CD4-positive, alpha-beta memory T cell (primary cell): ENCODE measurements at regions of chr2 and their contacts with region 1.

Region 1: DNA sequence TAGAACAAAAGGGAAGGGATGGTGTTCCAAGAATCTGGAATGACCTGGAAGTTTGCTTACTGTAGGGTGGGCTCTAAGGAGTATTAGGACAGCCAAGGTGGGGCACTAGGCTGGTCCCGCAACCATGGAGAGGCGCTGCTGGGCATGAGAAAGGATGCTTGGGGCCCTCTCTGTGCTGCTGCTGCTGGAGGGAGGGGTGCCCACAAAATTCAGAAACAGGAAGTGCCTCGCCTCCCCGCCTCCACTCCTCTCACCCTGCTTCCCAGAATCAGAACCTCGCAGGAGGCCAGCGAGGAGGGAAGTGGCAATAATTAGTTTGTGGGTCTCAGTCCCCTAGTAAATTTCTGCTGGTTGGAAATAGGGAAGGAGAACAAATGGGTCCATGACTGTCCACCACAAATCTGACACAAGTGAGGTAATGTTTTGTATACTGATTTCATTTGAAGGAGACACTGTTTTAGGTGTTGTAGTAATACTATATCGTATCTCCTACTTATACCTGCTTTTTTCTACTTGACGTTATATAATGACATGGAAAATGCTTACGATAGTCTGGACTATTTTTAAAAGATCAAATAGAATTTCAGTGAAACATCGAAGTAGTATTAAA is 7.9 kb upstream of the PDCL3 start:
- DNase-seq: peak in 4 of 5 donors; percentile 23 to 39 (median 29)
- H3K4me3 ChIP-seq: peak overlapping the region in 1 of 2 donors; percentile 11
- H3K4me3 Mint-ChIP-seq: peak overlapping the region; percentile 5 to 86 (median 70)
- H3K27ac ChIP-seq: peak overlapping the region; percentile 37
- H3K27ac Mint-ChIP-seq: peak overlapping the region; percentile 60 to 94 (median 87)
- H3K4me1 ChIP-seq: peaks cover 16% of the 10 kb centered on the region
- H3K4me1 Mint-ChIP-seq: peaks cover 14 to 21% (median 16%) of the 10 kb centered on the region in 4 donors
- H3K27me3 ChIP-seq: no peaks in the 10 kb centered on the region
- H3K27me3 Mint-ChIP-seq: peaks cover 0 to under 1% of the 10 kb centered on the region in 2 donors

Region 2: GRCh38 chr2:100588071-100588786 is 33.3 kb after region 1 on chr2:
- CTCF ChIA-PET with region 1: interaction called, 3 read pairs
- POLR2A ChIA-PET with region 1: interaction called, 5 read pairs
- intact Hi-C with region 1: loop called (anchors 5 kb)
- DNase-seq: peak; percentile 66 to 81 (median 73)
- H3K4me3 ChIP-seq: no peak overlapping the region
- H3K4me3 Mint-ChIP-seq: peak overlapping the region in 1 of 8 donors; percentile 6
- H3K27ac ChIP-seq: no peak overlapping the region
- H3K27ac Mint-ChIP-seq: peak overlapping the region; percentile 30 to 89 (median 70)
- H3K4me1 ChIP-seq: peaks cover 24% of the 10 kb centered on the region
- H3K4me1 Mint-ChIP-seq: peaks cover 16 to 47% (median 30%) of the 10 kb centered on the region in 4 donors
- H3K27me3 ChIP-seq: no peaks in the 10 kb centered on the region
- H3K27me3 Mint-ChIP-seq: no peaks in the 10 kb centered on the region

Region 3: DNA sequence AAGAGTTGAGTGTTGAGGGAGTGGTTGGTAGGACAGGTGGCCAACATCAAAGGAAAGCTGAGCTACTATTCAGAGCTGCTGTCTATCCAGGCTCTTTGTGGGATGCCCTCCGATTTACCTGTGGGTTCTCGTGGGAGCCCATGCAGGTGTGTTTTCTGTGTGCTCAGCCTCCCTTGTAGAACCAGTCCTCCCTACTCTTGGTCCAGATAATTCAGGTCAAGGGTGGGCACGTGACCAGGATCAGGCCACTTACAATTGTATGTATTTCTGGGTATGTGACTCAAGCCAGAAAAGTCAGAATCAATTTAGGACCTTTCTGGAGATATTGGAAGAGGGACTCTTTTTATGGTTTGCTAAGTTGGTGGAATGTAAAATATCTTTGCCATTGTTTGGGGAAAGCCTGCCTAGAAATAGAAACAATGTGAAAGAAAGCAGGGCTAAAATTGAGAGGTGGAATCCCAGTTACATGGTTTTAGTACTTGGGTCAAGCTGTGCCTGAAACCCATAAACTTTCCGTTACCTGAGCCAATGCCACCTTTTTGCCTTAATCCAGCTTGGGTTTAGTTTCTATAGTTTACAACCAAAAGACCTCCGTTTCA is 101.1 kb after region 1 on chr2:
- CTCF ChIA-PET with region 1: no interaction called
- POLR2A ChIA-PET with region 1: no interaction called
- intact Hi-C with region 1: no loop called
- DNase-seq: no peak
- H3K4me3 ChIP-seq: no peak overlapping the region
- H3K4me3 Mint-ChIP-seq: no peak overlapping the region
- H3K27ac ChIP-seq: no peak overlapping the region
- H3K27ac Mint-ChIP-seq: no peak overlapping the region
- H3K4me1 ChIP-seq: peaks cover 9% of the 10 kb centered on the region
- H3K4me1 Mint-ChIP-seq: peaks cover 0 to 11% (median 5%) of the 10 kb centered on the region in 4 donors
- H3K27me3 ChIP-seq: no peaks in the 10 kb centered on the region
- H3K27me3 Mint-ChIP-seq: peaks cover 1 to 3% of the 10 kb centered on the region in 2 donors